ENCODE measurements at regions of chr2 and their contacts with region 1.

Region 1: GRCh38 chr2:32478889-32479623 is 122.2 kb downstream of the BIRC6 start:
- DNase-seq: no peak
- ATAC-seq: no peak
- H3K4me3 ChIP-seq: no peak overlapping the region
- H3K4me3 Mint-ChIP-seq: no peak overlapping the region
- H3K27ac ChIP-seq: no peak overlapping the region
- H3K27ac Mint-ChIP-seq: peak overlapping the region in 2 of 9 donors; percentile 44 to 56
- H3K4me1 ChIP-seq: no peaks in the 10 kb centered on the region
- H3K4me1 Mint-ChIP-seq: peaks cover 0 to 3% (median 0%) of the 10 kb centered on the region in 7 donors
- H3K27me3 ChIP-seq: no peaks in the 10 kb centered on the region
- H3K27me3 Mint-ChIP-seq: no peaks in the 10 kb centered on the region

Region 2: DNA sequence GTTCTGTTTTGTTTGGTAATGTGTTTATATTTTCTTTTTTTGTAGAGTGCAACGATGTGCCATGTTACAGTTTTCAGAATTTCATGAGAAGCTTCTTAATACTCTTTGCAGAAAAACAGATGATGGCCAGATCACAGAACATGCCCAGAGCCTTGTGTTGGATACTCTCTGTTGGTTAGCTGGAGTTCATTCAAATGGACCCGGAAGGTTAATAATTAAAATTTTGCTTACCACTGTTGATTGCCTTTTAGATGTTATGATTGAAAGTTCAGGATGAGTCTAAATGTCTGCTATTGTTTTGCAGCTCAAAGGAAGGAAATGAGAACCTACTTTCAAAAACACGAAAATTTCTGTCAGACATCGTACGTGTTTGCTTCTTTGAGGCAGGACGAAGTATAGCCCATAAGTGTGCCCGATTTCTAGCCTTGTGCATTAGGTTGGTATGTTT is 37.0 kb before region 1 on chr2:
- CTCF ChIA-PET with region 1: no interaction called
- POLR2A ChIA-PET with region 1: no interaction called
- intact Hi-C with region 1: loop called in 1 of 2 experiments (anchors 5 kb)
- DNase-seq: no peak
- ATAC-seq: no peak
- H3K4me3 ChIP-seq: no peak overlapping the region
- H3K4me3 Mint-ChIP-seq: no peak overlapping the region
- H3K27ac ChIP-seq: no peak overlapping the region
- H3K27ac Mint-ChIP-seq: no peak overlapping the region
- H3K4me1 ChIP-seq: no peaks in the 10 kb centered on the region
- H3K4me1 Mint-ChIP-seq: peaks cover 0 to 4% (median 0%) of the 10 kb centered on the region in 7 donors
- H3K27me3 ChIP-seq: no peaks in the 10 kb centered on the region
- H3K27me3 Mint-ChIP-seq: no peaks in the 10 kb centered on the region